MCF 10A (cell line): ENCODE measurements at regions of chr1 and their contacts with region 1.

Region 1: DNA sequence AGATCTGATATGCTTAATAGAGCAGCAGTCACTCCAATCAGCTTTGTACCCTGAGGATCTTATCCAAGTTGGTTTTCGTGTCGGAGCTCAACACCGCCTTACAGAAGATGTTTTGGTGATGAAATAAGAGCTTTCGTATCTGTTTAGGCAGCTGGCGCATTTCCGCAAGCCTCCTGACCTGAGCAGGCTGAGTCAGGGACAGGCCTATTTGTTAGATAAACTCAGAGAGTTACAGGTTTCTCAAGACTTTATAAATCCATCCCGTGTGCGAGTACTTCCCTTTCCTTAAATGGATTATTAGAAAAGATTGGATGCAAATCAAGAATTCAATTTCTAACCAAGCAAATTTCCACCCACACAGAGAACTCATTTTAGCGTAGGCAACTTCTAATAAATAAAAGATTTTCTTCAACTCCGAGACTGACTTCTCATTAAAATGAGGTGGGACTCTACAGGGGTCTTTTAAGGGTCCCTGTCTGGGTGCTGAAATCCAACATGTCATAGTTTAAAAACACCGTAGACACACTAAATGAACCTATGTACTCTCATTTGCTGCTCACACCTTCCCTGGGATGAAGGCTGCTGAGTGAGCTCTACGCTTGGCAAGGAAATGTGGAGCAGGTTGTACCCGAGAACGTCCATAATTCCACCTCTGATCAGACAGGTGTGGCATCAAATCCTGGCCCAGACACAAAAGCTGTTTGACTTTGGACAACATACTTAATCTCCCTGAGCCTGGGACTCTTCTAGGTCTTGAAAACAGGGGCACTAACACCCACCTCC is 106.9 kb upstream of the F3 start:
- DNase-seq: peak; percentile 94
- H3K4me3 Mint-ChIP-seq: peak overlapping the region; percentile 56
- H3K27ac Mint-ChIP-seq: peak overlapping the region; percentile 93
- H3K4me1 Mint-ChIP-seq: peaks cover 25% of the 10 kb centered on the region
- H3K27me3 Mint-ChIP-seq: no peaks in the 10 kb centered on the region
- CTCF ChIP-seq: no peak

Region 2: GRCh38 chr1:93909146-93910050 is 739.0 kb before region 1 on chr1 and contains the start of gene GCLM:
- CTCF ChIA-PET with region 1: no interaction called
- POLR2A ChIA-PET with region 1: no interaction called
- intact Hi-C with region 1: no loop called
- DNase-seq: peak; percentile 95
- H3K4me3 Mint-ChIP-seq: peak within 1 kb of the TSS; percentile 81
- H3K27ac Mint-ChIP-seq: peak within 1 kb of the TSS; percentile 17
- H3K4me1 Mint-ChIP-seq: peaks cover 16% of the 10 kb centered on the region
- H3K27me3 Mint-ChIP-seq: peaks cover 23% of the 10 kb centered on the region
- CTCF ChIP-seq: peak; percentile 89
- total RNA-seq, gene GCLM: 21.1 and 21.3 TPM in 2 replicates

Region 3: DNA sequence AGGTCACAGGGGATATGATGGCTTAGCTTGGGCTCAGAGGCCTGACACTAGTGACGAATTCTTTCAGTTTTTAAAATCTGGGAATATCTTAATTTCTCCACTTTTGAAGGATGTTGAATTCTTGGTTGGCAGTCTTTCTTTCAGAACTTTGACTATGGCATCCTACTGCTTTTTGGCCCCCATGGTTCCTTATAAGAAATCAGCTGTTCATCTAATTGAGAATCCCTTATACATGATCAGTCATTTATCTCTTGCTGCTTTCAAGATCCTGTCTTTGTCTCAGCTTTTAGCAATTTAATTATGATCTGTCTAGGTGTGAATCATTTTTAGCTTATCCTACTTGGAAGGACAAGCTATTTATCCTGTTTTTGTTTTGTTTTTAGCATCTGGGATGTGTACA is 75.6 kb before region 1 on chr1:
- CTCF ChIA-PET with region 1: no interaction called
- POLR2A ChIA-PET with region 1: no interaction called
- intact Hi-C with region 1: no loop called
- DNase-seq: no peak
- H3K4me3 Mint-ChIP-seq: no peak overlapping the region
- H3K27ac Mint-ChIP-seq: no peak overlapping the region
- H3K4me1 Mint-ChIP-seq: no peaks in the 10 kb centered on the region
- H3K27me3 Mint-ChIP-seq: no peaks in the 10 kb centered on the region
- CTCF ChIP-seq: no peak

Region 4: GRCh38 chr1:94622757-94623156 is 25.7 kb before region 1 on chr1:
- CTCF ChIA-PET with region 1: interaction called, 3 read pairs
- POLR2A ChIA-PET with region 1: interaction called, 10 read pairs
- intact Hi-C with region 1: loop called (anchors 2 kb)
- DNase-seq: peak; percentile 81
- H3K4me3 Mint-ChIP-seq: peak overlapping the region; percentile 23
- H3K27ac Mint-ChIP-seq: peak overlapping the region; percentile 86
- H3K4me1 Mint-ChIP-seq: peaks cover 51% of the 10 kb centered on the region
- H3K27me3 Mint-ChIP-seq: no peaks in the 10 kb centered on the region
- CTCF ChIP-seq: no peak

Region 5: DNA sequence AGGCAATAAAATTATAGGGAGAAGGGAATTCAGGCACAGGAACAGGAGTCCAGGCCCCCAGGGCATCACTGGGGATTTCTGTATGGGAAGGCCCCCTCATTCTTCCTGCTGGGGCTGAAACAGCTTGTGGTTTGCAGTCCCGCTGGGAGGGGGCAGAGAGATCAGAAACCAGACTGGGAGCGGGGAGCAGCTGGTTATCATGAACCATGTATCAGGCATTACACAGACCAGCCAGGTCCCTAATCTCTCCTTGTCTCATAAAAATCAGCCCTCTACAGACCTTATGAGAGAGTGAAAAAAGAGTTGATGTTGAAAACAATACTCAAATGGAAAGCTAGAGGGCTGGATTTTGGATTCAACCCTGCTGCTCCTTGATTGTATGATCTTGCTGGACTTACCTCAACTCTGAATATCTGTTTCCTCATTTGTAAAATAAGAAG is 13.4 kb before region 1 on chr1:
- CTCF ChIA-PET with region 1: interaction called, 5 read pairs
- POLR2A ChIA-PET with region 1: interaction called, 10 read pairs
- intact Hi-C with region 1: no loop called
- DNase-seq: no peak
- H3K4me3 Mint-ChIP-seq: no peak overlapping the region
- H3K27ac Mint-ChIP-seq: peak overlapping the region; percentile 44
- H3K4me1 Mint-ChIP-seq: no peaks in the 10 kb centered on the region
- H3K27me3 Mint-ChIP-seq: no peaks in the 10 kb centered on the region
- CTCF ChIP-seq: no peak

Region 6: GRCh38 chr1:94727846-94728715 is 79.7 kb after region 1 on chr1:
- CTCF ChIA-PET with region 1: interaction called, 3 read pairs
- POLR2A ChIA-PET with region 1: no interaction called
- intact Hi-C with region 1: loop called (anchors 5 kb)
- DNase-seq: peak; percentile 85
- H3K4me3 Mint-ChIP-seq: no peak overlapping the region
- H3K27ac Mint-ChIP-seq: no peak overlapping the region
- H3K4me1 Mint-ChIP-seq: peaks cover 39% of the 10 kb centered on the region
- H3K27me3 Mint-ChIP-seq: no peaks in the 10 kb centered on the region
- CTCF ChIP-seq: no peak

Region 7: GRCh38 chr1:94734963-94735899 is 86.8 kb after region 1 on chr1:
- CTCF ChIA-PET with region 1: interaction called, 3 read pairs
- POLR2A ChIA-PET with region 1: interaction called, 5 read pairs
- intact Hi-C with region 1: loop called (anchors 2 kb)
- DNase-seq: peak; percentile 95
- H3K4me3 Mint-ChIP-seq: peak overlapping the region; percentile 18
- H3K27ac Mint-ChIP-seq: peak overlapping the region; percentile 93
- H3K4me1 Mint-ChIP-seq: peaks cover 60% of the 10 kb centered on the region
- H3K27me3 Mint-ChIP-seq: no peaks in the 10 kb centered on the region
- CTCF ChIP-seq: no peak

Region 8: GRCh38 chr1:94783342-94784264 is 135.2 kb after region 1 on chr1:
- CTCF ChIA-PET with region 1: no interaction called
- POLR2A ChIA-PET with region 1: interaction called, 10 read pairs
- intact Hi-C with region 1: no loop called
- DNase-seq: peak; percentile 87
- H3K4me3 Mint-ChIP-seq: peak overlapping the region; percentile 29
- H3K27ac Mint-ChIP-seq: peak overlapping the region; percentile 95
- H3K4me1 Mint-ChIP-seq: peaks cover 19% of the 10 kb centered on the region
- H3K27me3 Mint-ChIP-seq: no peaks in the 10 kb centered on the region
- CTCF ChIP-seq: no peak

Region 9: GRCh38 chr1:94926915-94927404 is 278.5 kb after region 1 on chr1 and contains the start of gene CNN3:
- CTCF ChIA-PET with region 1: no interaction called
- POLR2A ChIA-PET with region 1: no interaction called
- intact Hi-C with region 1: no loop called
- DNase-seq: peak; percentile 85
- H3K4me3 Mint-ChIP-seq: peak within 1 kb of the TSS; percentile 97
- H3K27ac Mint-ChIP-seq: peak within 1 kb of the TSS; percentile 69
- H3K4me1 Mint-ChIP-seq: peaks cover 22% of the 10 kb centered on the region
- H3K27me3 Mint-ChIP-seq: no peaks in the 10 kb centered on the region
- CTCF ChIP-seq: no peak
- total RNA-seq, gene CNN3: 44.5 and 48.2 TPM in 2 replicates